ENCODE measurements at regions of chr6 and their contacts with region 1.

Region 1: DNA sequence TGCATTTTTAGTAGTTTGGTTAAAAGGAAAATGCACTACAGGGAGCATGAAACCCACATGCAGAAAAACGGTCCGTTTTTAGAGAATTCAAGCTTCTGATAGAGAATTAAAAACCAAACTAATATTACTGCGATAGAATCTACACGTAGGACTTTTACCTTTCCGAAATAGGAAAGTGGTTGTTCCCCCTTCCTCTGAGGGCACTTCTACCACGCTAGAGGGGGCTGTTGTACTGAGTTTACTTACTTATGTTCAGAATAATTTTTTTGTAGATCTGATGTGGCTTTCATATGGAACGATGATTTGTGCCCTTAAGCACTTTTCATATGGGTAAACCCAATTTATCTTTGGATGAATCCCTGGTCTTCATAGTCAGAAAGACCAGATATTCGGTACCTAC is 264.3 kb upstream of the PLN start:
- DNase-seq: peak; percentile 59 to 81
- H3K4me3 ChIP-seq: no peak overlapping the region
- H3K27ac ChIP-seq: no peak overlapping the region
- H3K4me1 ChIP-seq: peaks cover 0 to 9% (median 3%) of the 10 kb centered on the region in 4 donors
- H3K27me3 ChIP-seq: no peaks in the 10 kb centered on the region
- CTCF ChIP-seq: peak in 5 of 7 experiments; percentile 54 to 68 (median 58)
- EP300 ChIP-seq: no peak
- POLR2A ChIP-seq: no peak

Region 2: GRCh38 chr6:118252474-118252873 is 31.3 kb before region 1 on chr6:
- intact Hi-C with region 1: no loop called
- DNase-seq: no peak
- H3K4me3 ChIP-seq: no peak overlapping the region
- H3K27ac ChIP-seq: no peak overlapping the region
- H3K4me1 ChIP-seq: no peaks in the 10 kb centered on the region
- H3K27me3 ChIP-seq: no peaks in the 10 kb centered on the region
- CTCF ChIP-seq: no peak
- EP300 ChIP-seq: no peak
- POLR2A ChIP-seq: no peak

Region 3: GRCh38 chr6:118509009-118509617 is 225.3 kb after region 1 on chr6:
- intact Hi-C with region 1: loop called (anchors 10 kb)
- DNase-seq: peak in 1 of 2 donors; percentile 48
- H3K4me3 ChIP-seq: no peak overlapping the region
- H3K27ac ChIP-seq: no peak overlapping the region
- H3K4me1 ChIP-seq: peaks cover 0 to 7% (median 0%) of the 10 kb centered on the region in 4 donors
- H3K27me3 ChIP-seq: no peaks in the 10 kb centered on the region
- CTCF ChIP-seq: peak in 4 of 7 experiments; percentile 16 to 36 (median 30)
- EP300 ChIP-seq: no peak
- POLR2A ChIP-seq: no peak

Region 4: DNA sequence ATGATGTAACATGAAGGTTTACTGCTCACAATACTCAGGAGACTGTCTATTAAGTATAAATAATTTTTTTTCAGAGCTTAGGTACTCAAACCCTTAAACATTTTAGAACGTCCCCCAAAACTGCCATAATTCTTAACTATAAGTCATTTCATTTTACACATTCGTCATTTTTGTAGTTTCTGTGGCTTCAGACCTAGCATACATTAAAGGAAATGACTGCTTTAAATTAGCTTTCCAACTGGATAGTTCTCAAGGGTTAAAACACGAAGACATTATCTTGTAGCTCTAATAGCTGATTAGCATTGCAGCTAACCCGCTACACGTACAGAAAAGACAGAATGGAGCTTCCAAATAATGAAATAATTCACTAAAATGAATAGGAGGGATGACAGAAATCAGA is 239.4 kb after region 1 on chr6:
- intact Hi-C with region 1: no loop called
- DNase-seq: no peak
- H3K4me3 ChIP-seq: no peak overlapping the region
- H3K27ac ChIP-seq: no peak overlapping the region
- H3K4me1 ChIP-seq: peaks cover 5 to 33% (median 21%) of the 10 kb centered on the region in 4 donors
- H3K27me3 ChIP-seq: no peaks in the 10 kb centered on the region
- CTCF ChIP-seq: no peak
- EP300 ChIP-seq: no peak
- POLR2A ChIP-seq: no peak

Region 5: GRCh38 chr6:119105282-119105681 is 821.5 kb after region 1 on chr6:
- intact Hi-C with region 1: loop called (anchors 10 kb)
- DNase-seq: no peak
- H3K4me3 ChIP-seq: no peak overlapping the region
- H3K27ac ChIP-seq: no peak overlapping the region
- H3K4me1 ChIP-seq: peaks cover 0 to 3% (median under 1%) of the 10 kb centered on the region in 4 donors
- H3K27me3 ChIP-seq: no peaks in the 10 kb centered on the region
- CTCF ChIP-seq: no peak
- EP300 ChIP-seq: no peak
- POLR2A ChIP-seq: no peak

Measured in stomach (tissue), 19 donors.